Activated CD4-positive, alpha-beta T cell treated with anti-CD3 and anti-CD28 coated beads, Interleukin-2, amount 10 ng/mL, durations not matched to agents 24 days and 14 days (primary cell): ENCODE measurements at regions of chr2 and their contacts with region 1.

Region 1: DNA sequence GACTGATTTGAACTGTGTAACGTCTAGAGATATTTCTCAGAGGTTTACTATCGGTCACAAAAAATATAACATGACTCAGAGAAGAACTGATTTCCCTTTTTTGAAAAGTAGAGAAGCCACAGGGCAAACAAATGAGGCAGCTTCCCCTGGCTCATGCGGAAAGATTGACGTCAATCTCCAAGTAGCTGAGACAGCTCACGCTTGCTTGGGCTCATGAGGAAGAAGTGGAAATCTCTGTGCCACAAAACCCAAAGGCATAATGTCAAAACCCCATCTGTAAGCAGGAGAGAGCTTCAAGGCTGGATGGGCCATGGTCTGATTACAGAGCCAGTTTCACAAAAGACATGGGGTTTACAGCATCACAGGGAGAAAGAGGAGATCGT is 188.1 kb downstream of the ARL4C start:
- DNase-seq: peak; percentile 94
- H3K4me3 Mint-ChIP-seq: peak overlapping the region; percentile 66
- H3K27ac Mint-ChIP-seq: peak overlapping the region; percentile 97
- H3K4me1 Mint-ChIP-seq: peaks cover 54% of the 10 kb centered on the region
- H3K27me3 Mint-ChIP-seq: no peaks in the 10 kb centered on the region

Region 2: GRCh38 chr2:234169187-234169570 is 139.6 kb before region 1 on chr2:
- intact Hi-C with region 1: no loop called
- DNase-seq: no peak
- H3K4me3 Mint-ChIP-seq: no peak overlapping the region
- H3K27ac Mint-ChIP-seq: no peak overlapping the region
- H3K4me1 Mint-ChIP-seq: peaks cover 8% of the 10 kb centered on the region
- H3K27me3 Mint-ChIP-seq: peaks cover 11% of the 10 kb centered on the region

Region 3: GRCh38 chr2:234278556-234279255 is 30.1 kb before region 1 on chr2:
- intact Hi-C with region 1: loop called (anchors 2 kb)
- DNase-seq: peak; percentile 82
- H3K4me3 Mint-ChIP-seq: peak overlapping the region; percentile 24
- H3K27ac Mint-ChIP-seq: peak overlapping the region; percentile 82
- H3K4me1 Mint-ChIP-seq: peaks cover 60% of the 10 kb centered on the region
- H3K27me3 Mint-ChIP-seq: no peaks in the 10 kb centered on the region

Region 4: DNA sequence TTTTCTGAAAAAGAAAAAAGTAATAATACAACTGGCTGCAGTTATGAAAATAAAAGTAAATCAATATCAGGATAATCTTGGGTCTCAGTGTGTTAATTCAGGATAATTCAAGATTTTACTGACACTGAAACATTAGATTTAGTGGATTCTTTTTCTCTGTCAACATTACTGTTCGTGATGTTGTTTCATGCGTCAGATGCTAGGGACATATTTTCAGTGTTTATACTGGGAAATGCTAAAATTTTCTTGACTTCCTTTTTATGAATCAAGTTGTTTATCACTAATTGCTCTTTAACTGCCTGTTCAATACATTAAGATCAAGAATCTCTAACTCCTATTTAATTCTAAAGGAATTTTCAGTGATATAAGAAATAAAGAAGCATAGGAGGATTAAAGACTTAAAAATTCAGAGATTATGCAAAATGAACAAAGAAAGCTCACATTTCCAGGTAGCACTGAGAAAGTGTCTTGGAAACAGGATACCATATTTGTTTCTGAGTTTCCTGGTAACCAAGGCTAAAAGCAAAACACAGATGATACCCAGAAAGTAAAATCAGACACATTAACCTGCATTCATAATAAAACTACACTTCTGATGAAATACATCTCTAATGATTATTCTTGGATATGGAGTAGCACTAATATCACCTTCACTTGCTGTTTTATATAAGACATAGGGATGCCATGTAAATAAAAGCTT is 14.1 kb after region 1 on chr2:
- intact Hi-C with region 1: loop called (anchors 2 kb)
- DNase-seq: no peak
- H3K4me3 Mint-ChIP-seq: peak overlapping the region; percentile 48
- H3K27ac Mint-ChIP-seq: peak overlapping the region; percentile 87
- H3K4me1 Mint-ChIP-seq: peaks cover 39% of the 10 kb centered on the region
- H3K27me3 Mint-ChIP-seq: no peaks in the 10 kb centered on the region

Region 5: DNA sequence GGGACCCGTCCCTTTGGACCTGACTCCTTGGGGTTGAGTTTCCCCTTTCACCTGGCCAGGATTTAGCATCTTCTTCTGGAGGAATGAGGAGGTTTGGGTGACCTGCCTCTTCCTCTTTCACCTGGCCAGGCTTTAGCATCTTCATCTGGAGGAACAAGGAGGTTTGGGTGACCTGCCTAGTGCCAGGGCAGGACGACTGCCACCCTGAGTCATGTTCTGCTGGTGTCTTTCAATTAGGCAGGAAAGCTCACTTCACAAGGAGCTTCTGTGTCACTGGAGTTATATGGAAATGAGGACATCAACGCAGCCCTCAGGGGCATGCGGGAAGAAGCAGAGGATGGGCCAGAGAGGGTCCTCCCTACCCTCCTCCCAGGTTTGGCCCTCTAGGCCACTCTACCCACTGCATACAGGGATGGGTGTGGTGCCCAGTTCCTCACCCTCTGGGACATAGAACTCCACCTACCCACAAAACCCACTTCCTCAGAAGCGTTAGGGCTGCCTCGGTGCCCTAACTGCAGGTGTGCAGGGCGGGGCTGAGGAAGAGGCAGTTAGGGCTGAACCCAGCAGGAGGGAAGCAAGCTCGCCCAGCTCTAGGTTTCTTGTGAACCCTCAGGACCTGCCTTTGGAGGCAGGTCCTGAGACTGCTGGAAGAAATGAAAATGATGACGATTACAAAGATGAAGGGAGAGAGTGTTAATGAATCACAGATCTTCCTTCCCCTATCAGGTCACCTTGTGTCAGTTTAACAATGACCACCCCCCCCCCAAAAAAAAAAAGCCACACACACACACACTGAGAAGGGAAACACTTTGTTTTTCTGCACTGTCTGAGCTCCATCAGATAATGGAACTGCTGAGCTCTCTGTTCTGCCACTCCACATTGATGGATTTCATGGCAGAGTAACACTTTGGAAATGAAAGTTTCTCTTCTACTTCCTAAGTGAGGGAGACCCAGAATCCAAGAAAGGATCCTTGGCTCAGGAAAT is 117.1 kb after region 1 on chr2:
- intact Hi-C with region 1: loop called (anchors 1 kb)
- DNase-seq: peak; percentile 94
- H3K4me3 Mint-ChIP-seq: peak overlapping the region; percentile 84
- H3K27ac Mint-ChIP-seq: peak overlapping the region; percentile 99
- H3K4me1 Mint-ChIP-seq: peaks cover 81% of the 10 kb centered on the region
- H3K27me3 Mint-ChIP-seq: no peaks in the 10 kb centered on the region

Region 6: DNA sequence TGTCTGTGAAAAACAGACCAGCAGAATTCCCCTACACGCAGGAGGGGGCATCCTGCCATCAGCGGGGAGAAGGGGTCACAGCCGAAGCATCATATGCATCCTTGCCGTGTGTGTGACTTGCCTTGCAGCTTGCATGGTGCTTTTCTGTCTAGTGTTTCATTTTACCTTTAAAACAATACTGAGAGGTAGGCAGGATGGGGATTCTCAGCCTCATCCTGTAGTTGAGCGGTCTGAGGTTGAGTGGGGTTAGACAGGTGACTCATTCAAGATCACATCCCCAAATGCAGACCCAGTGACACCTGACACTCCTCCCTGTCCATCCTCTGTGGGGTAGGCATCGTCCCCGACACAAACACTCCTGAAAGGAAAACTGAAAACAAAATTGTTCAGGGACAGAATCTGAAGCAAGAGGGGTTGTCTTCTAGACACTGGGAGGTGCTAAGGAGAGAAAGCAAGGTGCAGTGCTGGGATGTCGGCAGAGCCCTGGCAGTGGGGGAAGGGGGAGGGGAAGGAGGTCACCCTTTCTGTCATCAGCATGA is 180.2 kb after region 1 on chr2:
- intact Hi-C with region 1: loop called (anchors 1 kb)
- DNase-seq: peak; percentile 94
- H3K4me3 Mint-ChIP-seq: peak overlapping the region; percentile 90
- H3K27ac Mint-ChIP-seq: peak overlapping the region; percentile 97
- H3K4me1 Mint-ChIP-seq: peaks cover 84% of the 10 kb centered on the region
- H3K27me3 Mint-ChIP-seq: no peaks in the 10 kb centered on the region